AG04449 (cell line): ENCODE measurements at regions of chr19 and their contacts with region 1.

Region 1: DNA sequence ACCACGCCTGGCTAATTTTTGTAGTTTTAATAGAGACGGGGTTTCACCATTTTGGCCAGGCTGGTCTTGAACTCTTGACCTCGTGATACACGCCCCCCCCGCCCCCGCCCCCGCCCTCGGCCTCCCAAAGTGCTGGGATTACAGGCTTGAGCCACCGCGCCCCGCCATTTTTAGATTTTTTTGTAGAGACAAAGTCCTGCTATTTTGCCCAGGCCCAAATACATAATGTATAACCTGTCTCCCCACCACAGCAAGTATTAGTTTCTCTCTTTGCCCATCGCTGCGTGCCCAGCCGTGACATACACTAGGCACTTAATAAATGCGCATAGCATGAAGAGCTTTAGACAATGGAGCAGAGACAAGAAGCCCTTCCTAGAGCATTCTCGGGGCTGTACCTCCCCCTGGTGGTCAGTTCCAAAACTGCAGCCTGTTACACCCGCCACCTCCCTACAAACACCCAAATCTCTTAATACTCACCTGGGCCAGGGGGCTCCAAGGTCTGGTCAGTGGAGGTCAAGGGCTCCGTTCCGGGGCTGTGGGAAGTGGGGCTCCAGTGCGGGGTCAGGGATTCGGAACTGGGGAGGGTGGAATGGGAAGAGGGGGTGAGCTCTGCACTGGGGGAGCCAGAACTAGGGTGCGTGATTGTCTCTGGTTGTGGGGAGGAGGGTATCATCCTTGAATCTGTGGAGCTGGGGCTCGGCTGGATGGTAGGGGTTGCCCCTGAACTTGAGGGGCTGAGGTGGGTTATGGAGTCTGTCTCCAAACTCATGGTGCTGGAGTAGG is 22.5 kb downstream of the IQCN start:
- DNase-seq: no peak
- H3K4me3 ChIP-seq: no peak overlapping the region
- CTCF ChIP-seq: peak; percentile 85

Region 2: GRCh38 chr19:17951990-17952976 is 299.5 kb before region 1 on chr19:
- CTCF ChIA-PET with region 1: no interaction called
- POLR2A ChIA-PET with region 1: no interaction called
- DNase-seq: no peak
- H3K4me3 ChIP-seq: no peak overlapping the region
- CTCF ChIP-seq: no peak

Region 3: GRCh38 chr19:18152444-18152816 is 99.3 kb before region 1 on chr19:
- CTCF ChIA-PET with region 1: interaction called, 66 read pairs
- POLR2A ChIA-PET with region 1: no interaction called
- DNase-seq: peak; percentile 74
- H3K4me3 ChIP-seq: peak overlapping the region; percentile 66
- CTCF ChIP-seq: peak; percentile 68

Region 4: GRCh38 chr19:18183529-18183928 is 68.2 kb before region 1 on chr19:
- CTCF ChIA-PET with region 1: interaction called, 15 read pairs
- POLR2A ChIA-PET with region 1: no interaction called
- DNase-seq: no peak
- H3K4me3 ChIP-seq: no peak overlapping the region
- CTCF ChIP-seq: no peak

Region 5: GRCh38 chr19:18224525-18225354 is 27.0 kb before region 1 on chr19:
- CTCF ChIA-PET with region 1: interaction called, 21 read pairs
- POLR2A ChIA-PET with region 1: interaction called, 3 read pairs
- DNase-seq: peak; percentile 96
- H3K4me3 ChIP-seq: peak overlapping the region; percentile 62
- CTCF ChIP-seq: no peak

Region 6: DNA sequence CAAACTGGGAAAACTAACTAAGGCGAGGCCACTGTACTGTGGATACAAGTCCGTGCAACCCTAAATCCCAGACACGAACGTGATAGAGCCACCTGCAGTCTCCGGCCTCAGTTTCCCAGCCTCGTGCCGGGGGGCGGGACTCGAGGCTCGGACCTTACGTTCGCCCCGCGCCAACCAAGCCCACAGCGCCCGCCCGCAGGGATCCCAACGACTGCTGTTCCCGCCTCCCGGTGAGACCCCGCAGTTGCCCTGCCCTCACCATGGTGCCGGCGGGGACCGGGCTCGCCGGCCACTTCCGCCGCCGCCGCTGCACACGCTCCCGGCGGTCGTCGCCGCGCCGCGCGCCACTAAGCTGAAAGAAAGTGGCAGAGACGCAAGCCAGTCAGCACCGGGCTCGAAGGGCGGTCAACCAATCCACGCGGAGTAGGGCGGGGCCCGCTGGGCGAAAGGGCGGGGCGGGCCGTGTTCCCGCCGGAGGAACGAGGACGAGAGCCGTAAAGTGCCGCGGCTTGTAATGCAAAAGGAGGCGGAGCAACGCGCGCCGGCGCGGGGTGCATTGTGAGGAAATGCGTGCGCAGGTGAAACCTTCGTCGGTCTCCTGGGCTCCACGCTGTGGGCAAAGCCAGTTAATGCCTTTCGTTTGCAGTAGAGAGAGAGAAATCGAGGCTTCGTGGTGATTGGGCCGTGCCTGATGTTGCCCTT is 71.1 kb after region 1 on chr19 and contains the start of gene LSM4:
- CTCF ChIA-PET with region 1: interaction called, 43 read pairs
- POLR2A ChIA-PET with region 1: no interaction called
- DNase-seq: peak; percentile 65
- H3K4me3 ChIP-seq: peak within 1 kb of the TSS; percentile 84
- CTCF ChIP-seq: peak; percentile 41